PC-9 (cell line): ENCODE measurements at regions of chr3 and their contacts with region 1.

Region 1: DNA sequence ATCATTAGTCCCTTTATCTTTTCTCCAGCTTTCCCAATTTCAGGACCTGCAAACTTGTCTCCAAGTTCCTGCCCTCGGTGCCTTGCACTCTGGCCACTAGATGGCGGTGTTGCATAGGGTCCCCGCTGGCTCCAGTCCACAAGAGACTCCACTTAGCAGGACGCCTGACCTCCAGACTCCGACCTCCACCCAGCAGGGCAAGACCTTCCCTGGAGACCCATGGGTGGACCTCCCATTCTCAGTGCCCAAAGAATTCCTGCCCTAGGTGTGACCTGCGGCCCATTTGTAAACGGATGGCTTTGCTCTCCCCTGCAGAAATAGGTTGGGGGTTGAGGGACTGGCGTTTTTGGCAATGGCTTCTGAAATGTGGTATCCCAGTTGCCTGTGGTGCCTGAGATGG is 82.6 kb downstream of the LSM3 start:
- DNase-seq: peak; percentile 61 to 83
- H3K4me3 ChIP-seq: no peak overlapping the region
- H3K27ac ChIP-seq: no peak overlapping the region
- H3K4me1 ChIP-seq: peaks cover 44% of the 10 kb centered on the region
- H3K27me3 ChIP-seq: no peaks in the 10 kb centered on the region
- CTCF ChIP-seq: peak; percentile 99

Region 2: DNA sequence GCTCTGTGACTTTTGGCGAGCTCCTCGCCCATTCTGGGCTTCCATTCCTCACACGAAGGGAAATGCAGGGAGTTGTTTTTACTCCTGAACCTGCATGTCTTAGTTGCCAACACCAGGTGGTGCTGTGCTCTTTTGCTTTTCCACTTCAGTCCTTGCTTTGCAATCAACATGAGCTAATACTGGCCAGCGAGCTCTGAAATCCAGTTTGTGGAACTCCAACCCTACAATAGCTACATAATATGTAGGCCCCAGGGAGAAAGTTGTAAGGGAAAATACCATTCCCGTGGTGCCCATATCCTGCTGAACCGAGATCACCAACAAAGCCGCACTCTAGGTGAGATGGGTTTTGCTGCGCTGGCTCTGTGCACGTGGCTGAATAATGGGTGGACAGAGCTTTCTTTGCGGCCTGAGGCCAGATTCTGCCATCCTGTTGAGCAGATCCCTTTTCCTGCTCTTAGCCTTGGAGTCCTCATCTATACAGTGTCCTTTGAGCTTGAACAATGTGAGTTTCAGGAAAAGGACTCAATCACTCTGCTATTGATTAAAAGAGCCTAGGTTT is 57.6 kb before region 1 on chr3:
- CTCF ChIA-PET with region 1: interaction called, 40 read pairs
- POLR2A ChIA-PET with region 1: no interaction called
- intact Hi-C with region 1: loop called (anchors 1 kb)
- DNase-seq: peak; percentile 62 to 63
- H3K4me3 ChIP-seq: no peak overlapping the region
- H3K27ac ChIP-seq: no peak overlapping the region
- H3K4me1 ChIP-seq: peaks cover 39% of the 10 kb centered on the region
- H3K27me3 ChIP-seq: no peaks in the 10 kb centered on the region
- CTCF ChIP-seq: peak; percentile 96

Region 3: DNA sequence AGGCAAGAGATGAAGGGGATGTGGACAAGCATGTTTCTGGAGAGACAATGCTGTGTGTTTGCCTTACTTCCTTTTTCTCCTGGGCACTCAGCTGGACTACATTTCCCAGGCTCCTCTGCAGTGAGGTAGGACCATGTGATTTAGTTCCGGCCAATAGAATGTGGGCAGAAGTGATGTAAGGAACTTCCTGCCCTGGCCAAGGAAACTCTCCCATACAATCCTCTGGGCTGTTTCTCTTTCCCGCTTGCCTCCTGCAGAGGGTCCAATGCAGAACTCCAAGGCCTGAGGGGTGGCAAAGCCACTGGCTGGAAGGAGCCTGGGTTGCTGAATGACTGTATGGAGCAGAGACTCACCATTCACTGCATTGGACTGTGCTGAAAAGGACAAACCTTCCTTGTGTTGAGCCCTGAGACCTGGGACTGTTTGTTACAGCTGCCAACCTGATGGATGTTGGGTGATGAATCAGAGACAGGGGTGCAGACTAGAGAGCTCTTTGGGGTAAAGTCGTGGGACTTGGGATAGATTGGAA is 58.5 kb after region 1 on chr3:
- CTCF ChIA-PET with region 1: no interaction called
- POLR2A ChIA-PET with region 1: no interaction called
- intact Hi-C with region 1: loop called (anchors 10 kb)
- DNase-seq: peak; percentile 63 to 75
- H3K4me3 ChIP-seq: peak overlapping the region; percentile 55
- H3K27ac ChIP-seq: peak overlapping the region; percentile 35; the same call in 1 of the 2 replicates
- H3K4me1 ChIP-seq: peaks cover 62% of the 10 kb centered on the region
- H3K27me3 ChIP-seq: no peaks in the 10 kb centered on the region
- CTCF ChIP-seq: no peak

Region 4: GRCh38 chr3:14402304-14402811 is 141.1 kb after region 1 on chr3 and contains the start of gene SLC6A6:
- CTCF ChIA-PET with region 1: no interaction called
- POLR2A ChIA-PET with region 1: no interaction called
- intact Hi-C with region 1: loop called (anchors 1 kb)
- DNase-seq: peak; percentile 82 to 97
- H3K4me3 ChIP-seq: peak within 1 kb of the TSS; percentile 88
- H3K27ac ChIP-seq: peak within 1 kb of the TSS; percentile 99
- H3K4me1 ChIP-seq: peaks cover 39% of the 10 kb centered on the region
- H3K27me3 ChIP-seq: no peaks in the 10 kb centered on the region
- CTCF ChIP-seq: peak; percentile 57
- total RNA-seq, gene SLC6A6: 84.9 and 122 TPM in 2 replicates

Region 5: GRCh38 chr3:14461748-14462324 is 200.6 kb after region 1 on chr3:
- CTCF ChIA-PET with region 1: interaction called, 4 read pairs
- POLR2A ChIA-PET with region 1: no interaction called
- intact Hi-C with region 1: loop called (anchors 2 kb)
- DNase-seq: peak in 1 of 2 experiments; percentile 34
- H3K4me3 ChIP-seq: no peak overlapping the region
- H3K27ac ChIP-seq: no peak overlapping the region
- H3K4me1 ChIP-seq: no peaks in the 10 kb centered on the region
- H3K27me3 ChIP-seq: no peaks in the 10 kb centered on the region
- CTCF ChIP-seq: peak; percentile 72

Region 6: GRCh38 chr3:14508961-14509795 is 247.9 kb after region 1 on chr3:
- CTCF ChIA-PET with region 1: no interaction called
- POLR2A ChIA-PET with region 1: no interaction called
- intact Hi-C with region 1: loop called (anchors 2 kb)
- DNase-seq: peak; percentile 44 to 68
- H3K4me3 ChIP-seq: no peak overlapping the region
- H3K27ac ChIP-seq: no peak overlapping the region
- H3K4me1 ChIP-seq: 0 out of 2 replicates have a peak, but pooled peaks cover 5% of the 10 kb centered on the region
- H3K27me3 ChIP-seq: 0 out of 2 replicates have a peak, but pooled peaks cover 5% of the 10 kb centered on the region
- CTCF ChIP-seq: peak; percentile 96

Region 7: DNA sequence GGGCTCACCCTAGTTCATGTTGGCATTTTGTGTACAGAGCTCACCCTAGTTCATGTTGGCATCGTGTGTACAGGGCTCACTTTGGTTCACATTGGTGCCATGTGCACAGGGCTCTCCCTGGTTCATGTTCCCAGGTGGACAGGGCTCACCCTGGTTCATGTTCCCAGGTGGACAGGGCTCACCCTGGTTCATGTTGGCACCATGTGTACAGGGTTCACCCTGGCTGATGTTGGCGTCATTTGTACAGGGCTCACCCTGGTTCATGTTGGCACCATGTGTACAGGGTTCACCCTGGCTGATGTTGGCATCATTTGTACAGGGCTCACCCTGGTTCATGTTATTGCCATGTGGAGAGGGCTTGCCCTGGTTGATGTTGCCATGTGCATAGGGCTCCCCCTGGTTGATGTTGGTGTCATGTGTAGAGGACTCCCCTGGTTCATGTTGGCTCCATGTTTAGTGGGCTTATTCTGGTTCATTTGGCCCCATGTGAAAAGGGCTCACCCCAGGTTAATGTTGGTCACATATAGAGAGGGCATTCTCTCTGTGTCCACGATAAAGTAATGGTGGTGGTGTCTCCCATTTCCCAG is 654.5 kb after region 1 on chr3:
- CTCF ChIA-PET with region 1: no interaction called
- POLR2A ChIA-PET with region 1: no interaction called
- intact Hi-C with region 1: loop called (anchors 5 kb)
- DNase-seq: no peak
- H3K4me3 ChIP-seq: no peak overlapping the region
- H3K27ac ChIP-seq: no peak overlapping the region
- H3K4me1 ChIP-seq: no peaks in the 10 kb centered on the region
- H3K27me3 ChIP-seq: no peaks in the 10 kb centered on the region
- CTCF ChIP-seq: no peak